OCI-LY7 (cell line): ENCODE measurements at regions of chr16 and their contacts with region 1.

Region 1: GRCh38 chr16:88527186-88527936 is 42.8 kb upstream of the ZC3H18 start:
- DNase-seq: peak; percentile 67
- H3K4me3 ChIP-seq: no peak overlapping the region
- H3K27ac ChIP-seq: no peak overlapping the region
- H3K4me1 ChIP-seq: peaks cover 6% of the 10 kb centered on the region
- CTCF ChIP-seq: peak; percentile 85

Region 2: GRCh38 chr16:88442727-88443576 is 84.4 kb before region 1 on chr16:
- CTCF ChIA-PET with region 1: no interaction called
- POLR2A ChIA-PET with region 1: no interaction called
- intact Hi-C with region 1: loop called (anchors 1 kb)
- DNase-seq: peak; percentile 76
- H3K4me3 ChIP-seq: no peak overlapping the region
- H3K27ac ChIP-seq: no peak overlapping the region
- H3K4me1 ChIP-seq: no peaks in the 10 kb centered on the region
- CTCF ChIP-seq: peak; percentile 88